Kidney (tissue), 22 donors: ENCODE measurements at regions of chr11 and their contacts with region 1.

Region 1: GRCh38 chr11:34585735-34586487 is 35.0 kb upstream of the EHF start:
- DNase-seq: peak in 2 of 5 donors; percentile 85 to 87
- H3K4me3 ChIP-seq: peak overlapping the region in 1 of 3 donors; percentile 51
- H3K27ac ChIP-seq: no peak overlapping the region
- H3K4me1 ChIP-seq: no peaks in the 10 kb centered on the region
- H3K27me3 ChIP-seq: no peaks in the 10 kb centered on the region
- CTCF ChIP-seq: peak; percentile 56

Region 2: DNA sequence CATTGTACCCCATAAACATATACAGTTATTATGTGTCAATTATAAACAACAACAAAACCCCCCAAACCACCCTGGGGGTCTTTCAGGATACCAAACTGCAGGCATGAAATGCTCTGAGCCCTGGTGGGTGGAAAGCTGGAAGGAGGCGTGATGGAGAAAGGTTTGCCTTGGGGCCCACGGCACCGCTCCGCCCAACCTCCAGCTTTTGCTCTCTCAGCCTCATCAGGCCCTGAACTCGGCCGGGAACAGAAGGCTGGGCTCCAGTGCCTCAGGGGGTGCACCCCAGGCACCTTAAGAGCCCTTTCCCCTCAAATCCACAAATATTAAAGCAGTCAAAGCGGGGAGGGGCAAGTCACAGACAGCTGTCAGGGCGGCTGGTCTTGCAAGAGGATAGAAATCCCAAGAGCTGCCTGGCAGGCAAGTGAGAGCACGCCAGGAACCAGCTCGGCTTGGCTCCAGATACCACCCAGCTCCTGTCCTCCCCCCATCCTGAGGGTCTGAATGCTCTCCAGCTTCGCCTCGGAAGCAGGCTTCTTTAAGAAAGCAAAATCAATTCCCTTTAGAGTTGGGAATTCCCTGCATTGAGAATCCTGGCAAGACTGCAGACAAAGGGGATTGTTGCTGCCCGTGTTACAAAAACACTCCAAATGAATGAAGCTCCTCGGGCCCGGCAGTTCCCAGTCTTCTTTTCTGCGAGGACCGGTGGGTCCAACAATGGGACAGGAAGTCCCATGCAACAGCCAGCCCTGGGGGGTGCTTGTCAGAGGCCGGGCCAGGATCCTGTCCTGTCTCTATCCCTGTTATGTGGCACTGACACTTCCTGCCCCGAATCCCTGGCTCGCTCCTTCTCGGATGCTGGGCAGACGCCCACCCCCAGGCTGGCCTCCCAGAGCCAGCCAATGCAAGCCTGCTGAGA is 399.7 kb before region 1 on chr11:
- intact Hi-C with region 1: no loop called
- DNase-seq: peak in 1 of 5 donors; percentile 53
- H3K4me3 ChIP-seq: no peak overlapping the region
- H3K27ac ChIP-seq: no peak overlapping the region
- H3K4me1 ChIP-seq: peaks cover 0 to 27% (median 13%) of the 10 kb centered on the region in 3 donors
- H3K27me3 ChIP-seq: no peaks in the 10 kb centered on the region
- CTCF ChIP-seq: no peak

Region 3: GRCh38 chr11:34745195-34745594 is 159.3 kb after region 1 on chr11:
- intact Hi-C with region 1: no loop called
- DNase-seq: no peak
- H3K4me3 ChIP-seq: no peak overlapping the region
- H3K27ac ChIP-seq: no peak overlapping the region
- H3K4me1 ChIP-seq: no peaks in the 10 kb centered on the region
- H3K27me3 ChIP-seq: no peaks in the 10 kb centered on the region
- CTCF ChIP-seq: no peak

Region 4: GRCh38 chr11:34886609-34887008 is 300.7 kb after region 1 on chr11:
- intact Hi-C with region 1: loop called (anchors 10 kb)
- DNase-seq: no peak
- H3K4me3 ChIP-seq: no peak overlapping the region
- H3K27ac ChIP-seq: no peak overlapping the region
- H3K4me1 ChIP-seq: no peaks in the 10 kb centered on the region
- H3K27me3 ChIP-seq: no peaks in the 10 kb centered on the region
- CTCF ChIP-seq: no peak